Heart right ventricle (tissue), 16 donors: ENCODE measurements at regions of chr10 and their contacts with region 1.

Region 1: DNA sequence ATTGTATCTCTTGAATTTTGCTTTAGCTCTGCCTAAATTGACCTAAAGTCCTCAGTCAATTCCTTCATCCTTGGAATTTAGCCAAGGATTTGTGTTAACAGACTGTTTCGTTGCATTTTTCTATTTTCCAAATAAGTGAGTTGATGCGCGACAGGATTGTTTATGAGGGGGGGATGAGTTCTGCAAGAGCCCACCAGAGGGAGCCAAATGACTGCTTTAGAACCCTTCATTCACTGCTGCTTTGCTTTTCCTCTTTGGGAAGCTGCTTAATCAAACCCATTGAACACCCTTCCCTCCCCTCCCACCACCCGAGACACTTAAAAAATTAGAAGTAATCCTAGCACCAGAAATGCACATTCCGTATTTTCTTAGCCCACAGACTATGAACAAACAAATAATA is 33.7 kb upstream of the PTF1A start:
- DNase-seq: peak in 1 of 2 donors; percentile 19
- ATAC-seq: peak in 6 of 8 donors; percentile 69 to 81 (median 74)
- H3K4me3 ChIP-seq: no peak overlapping the region
- H3K27ac ChIP-seq: no peak overlapping the region
- H3K4me1 ChIP-seq: peaks cover 0 to 4% (median 0%) of the 10 kb centered on the region in 9 donors
- H3K27me3 ChIP-seq: peaks cover 0 to 34% (median 19%) of the 10 kb centered on the region in 7 donors
- CTCF ChIP-seq: peak; percentile 39 to 84 (median 78)

Region 2: GRCh38 chr10:23314835-23315239 is 156.5 kb after region 1 on chr10:
- intact Hi-C with region 1: loop called in 1 of 10 experiments (anchors 5 kb)
- DNase-seq: peak in 1 of 2 donors; percentile 72
- ATAC-seq: peak in 5 of 8 donors; percentile 56 to 65 (median 58)
- H3K4me3 ChIP-seq: no peak overlapping the region
- H3K27ac ChIP-seq: no peak overlapping the region
- H3K4me1 ChIP-seq: peaks cover 0 to 11% (median 0%) of the 10 kb centered on the region in 9 donors
- H3K27me3 ChIP-seq: no peaks in the 10 kb centered on the region
- CTCF ChIP-seq: peak; percentile 40 to 88 (median 78)

Region 3: GRCh38 chr10:23525406-23525805 is 367.0 kb after region 1 on chr10:
- intact Hi-C with region 1: loop called in 3 of 10 experiments (anchors 5 to 10 kb)
- DNase-seq: peak in 1 of 2 donors; percentile 18
- ATAC-seq: peak in 6 of 8 donors; percentile 55 to 84 (median 70)
- H3K4me3 ChIP-seq: no peak overlapping the region
- H3K27ac ChIP-seq: no peak overlapping the region
- H3K4me1 ChIP-seq: no peaks in the 10 kb centered on the region
- H3K27me3 ChIP-seq: no peaks in the 10 kb centered on the region
- CTCF ChIP-seq: peak; percentile 17 to 69 (median 60)

Region 4: DNA sequence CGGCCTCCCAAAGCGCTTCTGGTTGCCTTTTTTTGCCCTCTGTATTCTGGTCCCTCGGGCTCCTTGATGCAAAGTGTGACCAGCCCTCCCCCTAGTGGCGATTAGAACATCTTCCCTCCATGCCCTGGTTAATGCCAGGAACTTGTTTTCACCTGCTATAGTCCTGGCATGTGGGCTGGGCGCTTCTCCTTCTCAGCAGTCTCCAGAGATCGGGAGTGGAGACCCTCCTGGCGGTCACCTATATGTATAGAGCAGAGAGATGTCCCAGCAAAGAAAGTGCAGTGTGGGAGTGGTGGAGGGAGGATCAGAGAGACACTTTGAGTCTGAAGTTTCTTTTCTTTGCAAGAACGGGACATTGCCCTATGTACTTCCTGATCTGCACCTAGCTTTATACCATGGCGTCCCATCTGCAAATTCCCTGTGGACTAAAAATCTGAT is 544.6 kb after region 1 on chr10:
- intact Hi-C with region 1: loop called in 6 of 10 experiments (anchors 5 to 10 kb)
- DNase-seq: peak in 1 of 2 donors; percentile 47
- ATAC-seq: peak in 5 of 8 donors; percentile 58 to 83 (median 73)
- H3K4me3 ChIP-seq: no peak overlapping the region
- H3K27ac ChIP-seq: no peak overlapping the region
- H3K4me1 ChIP-seq: peaks cover 0 to 5% (median 0%) of the 10 kb centered on the region in 9 donors
- H3K27me3 ChIP-seq: peaks cover 0 to 41% (median 14%) of the 10 kb centered on the region in 7 donors
- CTCF ChIP-seq: peak; percentile 37 to 73 (median 67)